ENCODE measurements at regions of chr7 and their contacts with region 1.

Region 1: GRCh38 chr7:22618528-22618927 is 108.5 kb upstream of the IL6 start:
- DNase-seq: no peak
- ATAC-seq: no peak
- H3K4me3 Mint-ChIP-seq: no peak overlapping the region
- H3K27ac Mint-ChIP-seq: no peak overlapping the region
- H3K4me1 Mint-ChIP-seq: peaks cover 22% of the 10 kb centered on the region
- H3K27me3 Mint-ChIP-seq: no peaks in the 10 kb centered on the region
- CTCF ChIP-seq: no peak

Region 2: GRCh38 chr7:22577396-22578001 is 41.0 kb before region 1 on chr7:
- CTCF ChIA-PET with region 1: no interaction called
- POLR2A ChIA-PET with region 1: no interaction called
- intact Hi-C with region 1: no loop called
- DNase-seq: no peak
- ATAC-seq: peak; percentile 28
- H3K4me3 Mint-ChIP-seq: peak overlapping the region; percentile 57
- H3K27ac Mint-ChIP-seq: peak overlapping the region; percentile 79
- H3K4me1 Mint-ChIP-seq: peaks cover 40% of the 10 kb centered on the region
- H3K27me3 Mint-ChIP-seq: no peaks in the 10 kb centered on the region
- CTCF ChIP-seq: no peak

Region 3: GRCh38 chr7:22633954-22634474 is 15.5 kb after region 1 on chr7:
- CTCF ChIA-PET with region 1: interaction called, 3 read pairs
- POLR2A ChIA-PET with region 1: interaction called, 10 read pairs
- intact Hi-C with region 1: loop called (anchors 2 kb)
- DNase-seq: no peak
- ATAC-seq: no peak
- H3K4me3 Mint-ChIP-seq: no peak overlapping the region
- H3K27ac Mint-ChIP-seq: peak overlapping the region; percentile 26
- H3K4me1 Mint-ChIP-seq: peaks cover 24% of the 10 kb centered on the region
- H3K27me3 Mint-ChIP-seq: no peaks in the 10 kb centered on the region
- CTCF ChIP-seq: no peak